Activated naive CD4-positive, alpha-beta T cell treated with anti-CD3 and anti-CD28 coated beads for 36 hours (primary cell): ENCODE measurements at regions of chr18 and their contacts with region 1.

Region 1: DNA sequence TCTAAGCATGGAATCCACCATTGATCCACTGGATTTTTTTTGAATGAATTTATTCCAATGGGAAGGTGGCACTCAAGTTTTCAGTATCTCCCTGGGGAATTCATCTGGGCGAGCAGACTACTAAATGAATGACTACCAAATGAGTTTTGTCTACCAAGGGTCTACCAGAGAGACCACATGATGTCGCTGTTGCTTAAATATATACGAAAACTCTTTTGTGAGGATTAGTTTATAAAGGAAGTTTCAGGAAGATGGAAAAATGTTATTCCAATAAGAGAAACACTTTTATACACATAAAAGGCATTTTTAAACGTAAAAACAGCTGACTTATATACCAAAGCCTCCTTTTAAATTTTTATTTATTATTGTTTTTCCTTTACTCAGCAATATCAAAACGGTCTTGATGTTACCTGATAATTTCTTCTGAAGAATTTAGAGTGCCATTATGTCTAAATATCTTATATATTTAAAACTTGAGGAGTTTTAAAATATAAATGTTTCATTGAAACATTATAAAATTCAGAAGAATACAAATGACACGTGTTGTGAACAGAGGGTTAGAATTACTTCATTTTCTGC is 139.7 kb downstream of the HRH4 start:
- DNase-seq: no peak
- H3K4me3 Mint-ChIP-seq: no peak overlapping the region
- H3K27ac Mint-ChIP-seq: no peak overlapping the region
- H3K4me1 Mint-ChIP-seq: no peaks in the 10 kb centered on the region
- H3K27me3 Mint-ChIP-seq: peaks cover 4% of the 10 kb centered on the region

Region 2: DNA sequence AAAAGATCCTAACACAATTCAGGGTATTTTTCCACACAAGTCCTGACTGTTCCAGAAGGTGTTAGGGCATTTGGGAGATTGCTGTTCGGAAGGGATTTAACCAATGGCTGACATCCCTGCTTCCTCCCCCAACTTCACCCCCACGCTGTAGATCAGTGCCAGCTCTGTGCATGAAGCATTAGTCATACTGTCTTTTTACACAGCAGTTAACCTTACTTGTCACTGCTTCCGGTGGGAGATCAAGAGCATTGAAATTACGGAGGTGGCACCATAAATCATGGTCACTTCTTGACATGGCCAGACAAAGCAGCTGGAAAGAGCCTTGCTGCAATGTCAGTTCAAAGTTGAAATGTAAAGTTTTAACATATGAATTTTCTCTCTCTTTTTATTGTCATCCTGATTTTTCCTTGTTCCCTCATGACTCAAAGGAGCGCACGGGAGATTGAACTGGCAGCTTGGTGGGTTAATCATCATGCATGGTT is 69.5 kb before region 1 on chr18:
- CTCF ChIA-PET with region 1: no interaction called
- intact Hi-C with region 1: loop called (anchors 10 kb)
- DNase-seq: peak; percentile 23
- H3K4me3 Mint-ChIP-seq: no peak overlapping the region
- H3K27ac Mint-ChIP-seq: no peak overlapping the region
- H3K4me1 Mint-ChIP-seq: peaks cover 4% of the 10 kb centered on the region
- H3K27me3 Mint-ChIP-seq: peaks cover 24% of the 10 kb centered on the region

Region 3: DNA sequence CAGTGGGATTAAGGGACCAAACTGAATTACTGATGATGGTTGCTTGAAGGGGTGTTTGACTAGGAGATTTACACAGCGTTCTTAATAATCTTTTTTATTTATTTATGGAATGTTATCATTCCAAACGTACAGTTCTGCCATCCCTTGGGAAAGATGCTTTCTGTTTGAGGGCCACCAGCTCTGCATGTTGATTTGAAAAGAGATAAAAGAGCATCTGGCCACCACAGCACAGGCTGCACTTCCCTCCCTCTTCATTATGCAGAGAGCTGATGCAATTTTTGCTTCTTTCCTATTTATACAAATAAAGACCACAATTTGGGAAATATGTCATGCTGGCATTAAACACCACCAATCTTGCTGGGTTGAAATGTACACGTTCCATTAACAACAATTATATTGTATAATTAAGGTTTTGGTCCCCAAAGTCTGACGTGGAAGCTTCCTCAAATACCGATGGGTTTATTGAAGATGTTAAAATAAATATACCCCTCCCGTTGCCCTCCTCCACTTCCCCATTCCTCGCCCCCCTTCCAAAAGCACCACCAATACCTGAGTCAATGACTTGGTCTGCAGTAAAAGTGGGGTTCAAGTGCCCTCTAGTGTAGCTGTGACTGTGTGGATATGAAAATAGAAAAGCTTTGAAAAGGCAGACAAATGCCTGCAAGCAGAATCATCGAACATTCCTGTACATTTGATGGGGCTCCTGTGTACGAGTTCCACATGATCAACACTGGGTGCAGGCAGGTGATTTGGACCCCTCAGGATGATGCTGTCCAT is 72.2 kb after region 1 on chr18:
- CTCF ChIA-PET with region 1: interaction called, 3 read pairs
- intact Hi-C with region 1: loop called (anchors 1 kb)
- DNase-seq: peak; percentile 7
- H3K4me3 Mint-ChIP-seq: no peak overlapping the region
- H3K27ac Mint-ChIP-seq: no peak overlapping the region
- H3K4me1 Mint-ChIP-seq: no peaks in the 10 kb centered on the region
- H3K27me3 Mint-ChIP-seq: peaks cover 1% of the 10 kb centered on the region

Region 4: GRCh38 chr18:25896178-25896780 is 1296.1 kb after region 1 on chr18:
- CTCF ChIA-PET with region 1: no interaction called
- intact Hi-C with region 1: loop called (anchors 10 kb)
- DNase-seq: peak; percentile 49
- H3K4me3 Mint-ChIP-seq: no peak overlapping the region
- H3K27ac Mint-ChIP-seq: no peak overlapping the region
- H3K4me1 Mint-ChIP-seq: no peaks in the 10 kb centered on the region
- H3K27me3 Mint-ChIP-seq: no peaks in the 10 kb centered on the region